A673 (cell line): ENCODE measurements at regions of chr7 and their contacts with region 1.

Region 1: GRCh38 chr7:2555121-2556052 is at the start of gene BRAT1:
- DNase-seq: peak; percentile 97
- H3K4me3 ChIP-seq: peak within 1 kb of the TSS; percentile 73
- H3K27ac ChIP-seq: peak within 1 kb of the TSS; percentile 100
- H3K4me1 ChIP-seq: peaks cover 10% of the 10 kb centered on the region
- H3K27me3 ChIP-seq: no peaks in the 10 kb centered on the region
- CTCF ChIP-seq: peak; percentile 38; the same call in 1 of the 2 replicates
- total RNA-seq, gene BRAT1: 47.9 and 48.8 TPM in 2 replicates

Region 2: DNA sequence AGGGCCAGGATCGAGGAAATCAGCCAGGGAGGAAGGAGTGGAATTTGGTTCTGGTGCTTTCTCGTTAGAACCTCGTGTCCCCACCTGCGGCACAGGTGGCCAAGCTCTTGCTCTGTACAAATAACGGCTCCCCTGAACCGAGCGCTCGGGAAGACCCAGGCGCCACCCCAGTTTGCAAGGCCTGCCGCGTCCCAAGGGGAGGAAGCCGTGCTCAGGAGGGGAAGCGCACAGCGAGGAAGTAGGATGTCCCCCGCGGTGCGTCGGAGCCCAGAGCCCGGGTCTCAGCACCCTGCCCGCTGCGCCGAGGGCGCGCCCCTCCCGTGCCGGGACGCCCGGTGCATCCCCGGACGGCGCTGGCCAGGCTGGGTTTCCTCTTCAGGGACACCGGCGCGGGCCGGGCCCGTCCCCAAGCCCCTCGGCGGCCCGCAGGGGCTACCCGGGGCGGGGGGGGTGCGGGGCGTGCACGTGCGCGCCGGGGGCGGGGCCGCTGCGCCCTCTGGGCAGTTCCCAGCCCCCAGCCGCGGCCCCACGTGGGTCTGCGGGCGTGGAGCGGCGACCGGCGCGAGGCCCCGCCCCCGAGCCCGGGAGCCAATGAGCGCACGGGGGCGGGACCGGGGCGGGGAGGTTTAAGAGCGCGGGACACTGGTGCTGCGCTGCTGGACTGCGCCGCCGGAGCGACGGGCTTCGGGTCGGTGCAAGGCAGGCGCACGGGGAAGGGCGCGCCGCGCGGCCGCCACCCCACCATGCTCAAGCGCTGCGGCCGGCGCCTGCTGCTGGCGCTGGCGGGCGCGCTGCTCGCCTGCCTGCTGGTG is 36.1 kb before region 1 on chr7 and contains the start of gene LFNG:
- CTCF ChIA-PET with region 1: no interaction called
- POLR2A ChIA-PET with region 1: no interaction called
- intact Hi-C with region 1: loop called (anchors 5 kb)
- DNase-seq: peak; percentile 95
- H3K4me3 ChIP-seq: peak within 1 kb of the TSS; percentile 59
- H3K27ac ChIP-seq: peak within 1 kb of the TSS; percentile 47
- H3K4me1 ChIP-seq: peaks cover 43% of the 10 kb centered on the region
- H3K27me3 ChIP-seq: no peaks in the 10 kb centered on the region
- CTCF ChIP-seq: no peak
- total RNA-seq, gene LFNG: 8.7 and 11.7 TPM in 2 replicates

Region 3: GRCh38 chr7:2607122-2607922 is 51.9 kb after region 1 on chr7:
- CTCF ChIA-PET with region 1: no interaction called
- POLR2A ChIA-PET with region 1: no interaction called
- intact Hi-C with region 1: no loop called
- DNase-seq: no peak
- H3K4me3 ChIP-seq: no peak overlapping the region
- H3K27ac ChIP-seq: no peak overlapping the region
- H3K4me1 ChIP-seq: no peaks in the 10 kb centered on the region
- H3K27me3 ChIP-seq: no peaks in the 10 kb centered on the region
- CTCF ChIP-seq: no peak

Region 4: DNA sequence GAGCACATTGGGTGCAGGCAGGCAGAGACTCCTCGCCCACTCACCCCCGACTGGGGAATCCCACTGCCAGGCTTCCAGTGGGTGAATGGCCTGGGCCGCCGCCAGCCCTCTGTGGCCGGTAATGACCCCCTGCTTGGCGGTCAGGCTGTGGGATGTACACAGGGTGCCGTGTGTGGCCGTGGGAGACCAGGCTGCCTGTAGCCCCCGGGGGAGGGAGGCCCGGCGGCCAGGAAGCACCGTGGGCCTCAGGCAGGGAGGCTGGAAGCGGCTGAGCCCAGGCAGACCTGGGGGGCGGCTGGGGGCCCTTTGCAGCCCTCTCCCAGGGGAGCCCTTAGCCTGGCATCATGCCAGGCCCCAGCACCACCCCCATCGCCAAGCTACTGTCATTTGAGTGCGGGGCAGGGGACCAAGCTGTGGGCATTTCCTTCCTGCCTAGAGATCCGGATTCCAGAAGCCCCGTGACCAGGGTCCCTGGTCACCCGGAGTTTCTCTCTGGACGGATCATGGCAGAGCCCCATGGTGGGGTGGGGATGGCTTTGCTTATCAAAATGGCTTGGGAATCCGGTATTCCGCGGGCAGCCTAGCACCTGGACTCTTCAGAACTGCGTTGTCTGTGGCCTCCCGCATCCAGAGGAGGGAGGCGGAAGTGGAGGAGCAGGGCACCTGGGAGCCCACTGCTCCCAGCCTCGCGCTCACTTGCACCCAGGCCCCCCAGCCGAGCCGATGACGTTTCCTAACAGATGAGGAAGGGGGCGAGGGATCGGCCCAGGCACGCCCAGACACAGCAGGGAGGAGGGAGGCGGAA is 77.5 kb after region 1 on chr7:
- CTCF ChIA-PET with region 1: interaction called, 4 read pairs
- POLR2A ChIA-PET with region 1: interaction called, 3 read pairs
- intact Hi-C with region 1: loop called (anchors 5 kb)
- DNase-seq: no peak
- H3K4me3 ChIP-seq: peak overlapping the region; percentile 98
- H3K27ac ChIP-seq: peak overlapping the region; percentile 98
- H3K4me1 ChIP-seq: peaks cover 15% of the 10 kb centered on the region
- H3K27me3 ChIP-seq: no peaks in the 10 kb centered on the region
- CTCF ChIP-seq: no peak

Region 5: DNA sequence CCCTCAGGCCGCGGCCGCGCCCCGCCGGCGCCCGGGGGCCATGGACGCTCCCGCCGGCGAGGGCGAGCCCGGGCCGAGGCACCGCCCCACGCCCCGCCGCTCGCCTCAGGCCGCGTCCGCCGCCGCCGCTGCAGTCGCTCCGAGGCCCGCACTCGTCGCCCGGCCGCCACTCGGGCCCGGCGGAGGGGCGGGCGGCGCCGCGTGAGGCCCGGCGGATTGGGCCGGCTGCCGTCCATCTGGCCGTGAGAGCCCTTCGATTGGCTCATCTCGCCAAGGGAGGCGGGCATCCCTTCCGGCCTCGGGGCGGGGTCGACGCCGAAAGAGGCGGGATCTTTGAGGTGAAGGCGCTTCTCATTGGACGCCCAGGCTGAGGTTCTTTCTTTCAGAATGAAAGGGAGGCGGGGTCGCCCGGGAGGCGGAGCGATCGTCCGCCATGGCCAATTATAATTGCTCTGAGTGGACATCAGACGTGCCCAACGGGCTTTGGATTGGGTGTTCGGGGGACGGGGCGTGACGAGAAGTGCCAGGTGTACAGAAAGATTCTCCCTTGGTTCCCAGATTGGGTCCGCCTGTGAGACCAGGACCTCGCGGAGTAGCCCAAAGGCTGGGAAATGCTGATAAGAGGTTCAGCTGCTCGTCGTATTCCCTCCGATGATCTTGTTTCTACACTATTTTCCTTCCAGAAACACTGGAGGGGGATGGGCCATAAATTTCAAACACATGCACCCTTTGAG is 288.9 kb after region 1 on chr7 and contains the start of gene GNA12:
- CTCF ChIA-PET with region 1: interaction called, 11 read pairs
- POLR2A ChIA-PET with region 1: no interaction called
- intact Hi-C with region 1: no loop called
- DNase-seq: peak; percentile 99
- H3K4me3 ChIP-seq: peak within 1 kb of the TSS; percentile 56
- H3K27ac ChIP-seq: peak within 1 kb of the TSS; percentile 14
- H3K4me1 ChIP-seq: no peaks in the 10 kb centered on the region
- H3K27me3 ChIP-seq: no peaks in the 10 kb centered on the region
- CTCF ChIP-seq: no peak
- total RNA-seq, gene GNA12: 35.5 and 41.2 TPM in 2 replicates

Region 6: DNA sequence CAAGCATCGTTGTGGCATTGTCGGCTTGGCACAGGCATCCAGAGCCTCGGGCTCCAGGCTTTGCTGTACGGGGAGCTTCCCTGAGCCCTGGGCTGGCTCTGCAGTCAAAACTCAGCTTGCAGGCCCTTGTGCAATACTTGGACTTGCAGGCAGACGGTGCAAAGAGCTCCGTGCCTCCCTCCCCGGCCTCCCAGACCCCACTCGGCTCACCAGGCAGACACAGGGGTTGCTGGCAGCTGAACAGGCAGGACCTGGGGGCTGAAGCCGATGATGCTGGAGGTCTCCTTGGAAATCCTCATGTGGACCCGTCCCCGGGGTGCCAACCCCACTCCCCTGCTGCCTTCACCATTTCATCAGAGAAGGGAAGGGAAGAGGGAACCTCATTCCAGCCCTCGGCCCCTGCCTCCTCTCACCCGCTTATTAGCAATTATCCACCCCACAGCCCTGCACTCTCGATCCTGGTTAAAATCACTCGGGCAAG is 348.3 kb after region 1 on chr7:
- CTCF ChIA-PET with region 1: no interaction called
- POLR2A ChIA-PET with region 1: no interaction called
- intact Hi-C with region 1: no loop called
- DNase-seq: no peak
- H3K4me3 ChIP-seq: no peak overlapping the region
- H3K27ac ChIP-seq: no peak overlapping the region
- H3K4me1 ChIP-seq: no peaks in the 10 kb centered on the region
- H3K27me3 ChIP-seq: no peaks in the 10 kb centered on the region
- CTCF ChIP-seq: no peak

Region 7: GRCh38 chr7:3835109-3835508 is 1279.7 kb after region 1 on chr7:
- CTCF ChIA-PET with region 1: no interaction called
- POLR2A ChIA-PET with region 1: no interaction called
- intact Hi-C with region 1: no loop called
- DNase-seq: no peak
- H3K4me3 ChIP-seq: no peak overlapping the region
- H3K27ac ChIP-seq: no peak overlapping the region
- H3K4me1 ChIP-seq: no peaks in the 10 kb centered on the region
- H3K27me3 ChIP-seq: no peaks in the 10 kb centered on the region
- CTCF ChIP-seq: no peak